Activated CD4-positive, alpha-beta T cell treated with anti-CD3 and anti-CD28 coated beads for 36 hours (primary cell): ENCODE measurements at regions of chr1 and their contacts with region 1.

Region 1: GRCh38 chr1:20048563-20048962 is 21.4 kb upstream of the PLA2G5 start:
- DNase-seq: no peak
- ATAC-seq: no peak
- H3K4me3 Mint-ChIP-seq: no peak overlapping the region
- H3K27ac Mint-ChIP-seq: no peak overlapping the region
- H3K4me1 Mint-ChIP-seq: peaks cover 4% of the 10 kb centered on the region
- H3K27me3 Mint-ChIP-seq: no peaks in the 10 kb centered on the region

Region 2: GRCh38 chr1:20017741-20018140 is 30.8 kb before region 1 on chr1:
- CTCF ChIA-PET with region 1: no interaction called
- POLR2A ChIA-PET with region 1: no interaction called
- intact Hi-C with region 1: no loop called
- DNase-seq: no peak
- ATAC-seq: no peak
- H3K4me3 Mint-ChIP-seq: no peak overlapping the region
- H3K27ac Mint-ChIP-seq: no peak overlapping the region
- H3K4me1 Mint-ChIP-seq: no peaks in the 10 kb centered on the region
- H3K27me3 Mint-ChIP-seq: no peaks in the 10 kb centered on the region

Region 3: DNA sequence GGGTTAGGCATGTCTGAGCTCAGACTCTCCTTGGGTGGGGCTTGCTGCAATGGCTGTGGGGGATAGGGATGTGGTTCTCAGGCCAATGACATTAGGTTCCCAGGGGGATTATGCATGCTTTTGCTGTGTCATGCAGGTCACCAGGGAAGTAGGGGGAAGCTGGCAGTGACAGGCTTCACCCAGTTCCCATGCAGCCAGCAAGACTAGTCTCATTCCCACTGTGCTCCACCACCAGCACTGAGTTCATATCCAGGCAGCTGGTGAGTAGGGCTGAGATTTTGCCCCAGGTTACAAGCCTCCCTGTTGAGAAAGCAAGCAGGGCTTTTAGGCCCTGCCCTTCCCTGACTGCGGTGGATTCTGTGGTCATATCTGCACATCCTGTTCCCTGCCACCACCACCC is 10.7 kb before region 1 on chr1:
- CTCF ChIA-PET with region 1: no interaction called
- POLR2A ChIA-PET with region 1: no interaction called
- intact Hi-C with region 1: no loop called
- DNase-seq: peak; percentile 14
- ATAC-seq: no peak
- H3K4me3 Mint-ChIP-seq: no peak overlapping the region
- H3K27ac Mint-ChIP-seq: no peak overlapping the region
- H3K4me1 Mint-ChIP-seq: peaks cover 13% of the 10 kb centered on the region
- H3K27me3 Mint-ChIP-seq: peaks cover 13% of the 10 kb centered on the region

Region 4: DNA sequence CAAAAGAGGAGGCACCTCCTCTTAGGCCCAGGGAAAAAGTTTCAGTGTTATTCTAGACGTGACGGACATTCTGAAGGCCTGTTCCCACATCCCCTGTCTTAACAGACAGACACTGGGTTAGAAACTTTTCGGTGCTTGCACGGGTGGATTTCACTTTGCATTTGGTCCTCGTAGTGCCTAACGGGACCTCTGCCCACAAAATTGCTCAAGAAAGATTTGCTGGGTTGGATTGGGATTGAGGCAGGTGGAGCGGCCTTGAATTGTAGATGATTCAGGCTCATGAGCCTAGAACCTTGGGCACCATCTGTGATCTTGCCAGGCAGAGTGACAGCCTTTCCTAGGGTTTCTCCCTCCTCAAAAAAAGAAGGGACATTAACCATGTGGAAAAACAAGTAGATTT is 24.2 kb after region 1 on chr1:
- CTCF ChIA-PET with region 1: no interaction called
- POLR2A ChIA-PET with region 1: no interaction called
- intact Hi-C with region 1: loop called in 1 of 2 experiments (anchors 1 kb)
- DNase-seq: no peak
- ATAC-seq: no peak
- H3K4me3 Mint-ChIP-seq: no peak overlapping the region
- H3K27ac Mint-ChIP-seq: no peak overlapping the region
- H3K4me1 Mint-ChIP-seq: no peaks in the 10 kb centered on the region
- H3K27me3 Mint-ChIP-seq: peaks cover 6% of the 10 kb centered on the region